ENCODE measurements at regions of chr2 and their contacts with region 1.

Region 1: DNA sequence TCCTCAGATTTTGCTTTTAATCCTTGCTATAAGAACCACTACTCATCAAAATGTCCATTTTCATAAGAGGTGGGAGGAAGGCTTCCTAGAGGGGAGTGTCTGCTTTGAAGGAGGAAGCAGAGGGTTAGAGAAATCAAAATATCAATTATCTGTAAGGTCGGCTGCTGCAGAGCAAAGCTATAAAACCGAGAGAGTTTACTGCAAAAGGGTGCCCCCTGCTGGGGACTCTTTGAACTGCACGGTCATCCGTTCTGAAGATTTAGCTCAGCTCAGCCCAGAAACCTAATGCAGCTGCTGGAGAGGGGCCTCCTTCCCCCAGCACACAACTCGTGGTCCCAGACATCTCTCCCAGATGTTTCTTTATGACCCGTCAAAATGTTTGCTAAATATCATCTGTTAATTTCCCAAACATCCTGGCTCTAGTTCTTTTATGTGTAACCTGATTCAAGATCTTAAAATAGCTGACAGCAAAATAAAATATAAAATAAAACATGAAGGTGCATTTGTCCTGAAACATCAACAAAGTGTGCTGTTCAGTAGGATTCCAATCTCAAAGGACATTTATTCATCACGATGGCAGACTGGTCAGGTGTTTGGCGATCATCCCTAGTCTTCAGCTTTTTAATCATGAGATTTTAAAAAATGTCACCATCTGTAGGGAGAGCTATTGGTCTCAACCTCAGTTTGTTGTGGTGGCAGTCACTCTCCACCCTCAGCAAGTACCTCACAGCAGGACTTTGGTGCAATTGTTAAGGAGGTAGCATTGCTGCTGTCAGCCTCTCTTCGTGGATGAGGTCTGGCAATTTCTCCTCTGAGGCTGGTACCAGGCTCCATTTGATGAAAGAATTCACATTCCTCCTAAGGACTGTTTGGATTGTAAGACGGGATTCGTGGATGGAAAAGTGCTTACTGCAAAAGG is 185.9 kb downstream of the MTX2 start:
- DNase-seq: peak; percentile 68
- H3K4me3 Mint-ChIP-seq: no peak overlapping the region
- H3K27ac Mint-ChIP-seq: no peak overlapping the region
- H3K4me1 Mint-ChIP-seq: peaks cover 6% of the 10 kb centered on the region
- H3K27me3 Mint-ChIP-seq: no peaks in the 10 kb centered on the region
- CTCF ChIP-seq: peak; percentile 81

Region 2: GRCh38 chr2:176140513-176141317 is 314.4 kb before region 1 on chr2:
- CTCF ChIA-PET with region 1: interaction called, 190 read pairs
- POLR2A ChIA-PET with region 1: interaction called, 6 read pairs
- intact Hi-C with region 1: loop called (anchors 1 kb)
- DNase-seq: peak; percentile 73
- H3K4me3 Mint-ChIP-seq: peak overlapping the region; percentile 57
- H3K27ac Mint-ChIP-seq: no peak overlapping the region
- H3K4me1 Mint-ChIP-seq: no peaks in the 10 kb centered on the region
- H3K27me3 Mint-ChIP-seq: no peaks in the 10 kb centered on the region
- CTCF ChIP-seq: peak; percentile 96

Region 3: DNA sequence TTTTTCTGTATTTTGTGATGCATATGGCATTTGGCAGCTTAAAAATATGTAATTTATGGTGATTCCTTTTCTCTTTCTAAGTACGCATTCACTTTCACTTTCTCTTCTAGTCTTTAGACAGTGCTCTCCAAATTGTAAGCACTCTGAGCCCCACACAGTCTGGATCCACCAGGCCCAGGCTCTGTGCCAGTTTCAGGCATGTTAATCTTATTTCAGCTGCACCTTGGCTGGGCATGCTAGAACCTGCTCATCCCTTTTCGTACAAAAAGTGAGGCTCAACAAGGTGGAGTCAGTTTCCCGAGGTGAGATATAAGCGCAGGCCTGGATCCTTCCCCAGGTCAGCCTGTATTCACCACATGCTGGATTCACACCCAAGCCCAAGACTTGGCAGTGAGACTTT is 18.0 kb after region 1 on chr2:
- CTCF ChIA-PET with region 1: interaction called, 23 read pairs
- POLR2A ChIA-PET with region 1: interaction called, 13 read pairs
- intact Hi-C with region 1: no loop called
- DNase-seq: peak; percentile 97
- H3K4me3 Mint-ChIP-seq: peak overlapping the region; percentile 73
- H3K27ac Mint-ChIP-seq: peak overlapping the region; percentile 87
- H3K4me1 Mint-ChIP-seq: peaks cover 16% of the 10 kb centered on the region
- H3K27me3 Mint-ChIP-seq: no peaks in the 10 kb centered on the region
- CTCF ChIP-seq: no peak

Region 4: GRCh38 chr2:176491172-176491904 is 36.2 kb after region 1 on chr2:
- CTCF ChIA-PET with region 1: interaction called, 10 read pairs
- POLR2A ChIA-PET with region 1: interaction called, 5 read pairs
- intact Hi-C with region 1: no loop called
- DNase-seq: peak; percentile 99
- H3K4me3 Mint-ChIP-seq: peak overlapping the region; percentile 55
- H3K27ac Mint-ChIP-seq: peak overlapping the region; percentile 90
- H3K4me1 Mint-ChIP-seq: peaks cover 54% of the 10 kb centered on the region
- H3K27me3 Mint-ChIP-seq: no peaks in the 10 kb centered on the region
- CTCF ChIP-seq: no peak

Region 5: DNA sequence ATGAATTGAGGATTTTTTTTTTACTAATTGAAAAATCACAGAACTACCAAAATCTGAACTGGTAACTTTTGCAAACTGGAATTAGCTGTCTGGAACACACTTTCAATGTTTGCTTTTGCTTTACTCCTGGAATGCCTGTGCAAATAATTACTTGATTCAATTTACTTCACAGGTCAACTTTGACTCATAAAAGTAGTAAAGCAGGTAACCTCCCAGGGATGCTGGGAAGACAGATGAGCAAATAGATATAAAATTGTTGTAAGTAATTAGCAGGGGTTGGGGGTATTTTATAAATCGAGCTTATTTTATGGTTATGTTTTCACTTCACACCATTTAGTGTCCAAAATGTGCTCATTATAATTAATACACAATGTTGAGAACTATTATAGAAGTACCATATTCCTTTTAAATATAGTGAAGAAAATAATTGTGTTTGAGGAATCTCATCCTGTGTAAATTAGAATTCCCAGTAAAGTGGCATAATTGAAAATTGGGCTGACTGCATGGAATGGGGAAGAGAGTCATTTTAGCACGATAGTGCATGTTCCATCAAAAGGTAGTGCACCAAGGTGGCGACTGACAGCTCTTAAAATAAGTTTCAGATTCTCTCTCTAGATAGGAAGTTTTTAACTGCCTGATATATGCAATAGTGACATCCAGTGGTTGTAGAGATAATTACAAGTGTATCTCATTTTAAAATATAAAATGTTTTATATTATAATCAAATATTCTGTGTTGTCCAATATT is 359.3 kb after region 1 on chr2:
- CTCF ChIA-PET with region 1: no interaction called
- POLR2A ChIA-PET with region 1: no interaction called
- intact Hi-C with region 1: loop called (anchors 10 kb)
- DNase-seq: peak; percentile 38
- H3K4me3 Mint-ChIP-seq: no peak overlapping the region
- H3K27ac Mint-ChIP-seq: no peak overlapping the region
- H3K4me1 Mint-ChIP-seq: no peaks in the 10 kb centered on the region
- H3K27me3 Mint-ChIP-seq: peaks cover 12% of the 10 kb centered on the region
- CTCF ChIP-seq: peak; percentile 59